ENCODE measurements at regions of chr3 and their contacts with region 1.

Region 1: DNA sequence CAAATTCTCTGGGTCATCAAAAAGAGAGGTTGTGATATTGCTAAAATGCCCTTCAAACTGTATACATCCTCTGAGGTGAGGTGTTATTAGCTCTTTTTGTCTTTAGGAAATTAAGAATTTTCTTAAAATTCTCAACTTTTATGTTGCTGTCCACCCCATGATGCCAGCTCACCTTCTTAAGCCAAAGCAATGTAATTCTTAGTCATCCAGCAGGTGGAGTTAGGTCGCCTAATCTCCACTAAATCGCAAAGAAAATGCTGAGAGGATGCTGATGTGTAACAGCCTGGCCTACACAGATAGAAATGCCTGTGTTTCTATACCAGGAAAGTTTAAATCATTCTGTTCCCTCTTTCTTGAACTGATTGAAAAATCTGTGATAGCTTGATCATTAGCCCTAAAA is 770.2 kb upstream of the ALCAM start:
- DNase-seq: peak; percentile 9
- H3K4me3 ChIP-seq: no peak overlapping the region
- CTCF ChIP-seq: peak; percentile 31

Region 2: GRCh38 chr3:104521606-104522336 is 74.8 kb before region 1 on chr3:
- CTCF ChIA-PET with region 1: no interaction called
- POLR2A ChIA-PET with region 1: no interaction called
- DNase-seq: no peak
- H3K4me3 ChIP-seq: no peak overlapping the region
- CTCF ChIP-seq: no peak

Region 3: GRCh38 chr3:104606812-104607211 is 10.3 kb after region 1 on chr3:
- CTCF ChIA-PET with region 1: interaction called, 12 read pairs
- POLR2A ChIA-PET with region 1: no interaction called
- DNase-seq: no peak
- H3K4me3 ChIP-seq: no peak overlapping the region
- CTCF ChIP-seq: no peak

Region 4: GRCh38 chr3:104750581-104750980 is 154.0 kb after region 1 on chr3:
- CTCF ChIA-PET with region 1: no interaction called
- POLR2A ChIA-PET with region 1: no interaction called
- DNase-seq: no peak
- H3K4me3 ChIP-seq: no peak overlapping the region
- CTCF ChIP-seq: no peak

Region 5: GRCh38 chr3:105366326-105367062 is 769.9 kb after region 1 on chr3 and contains the start of gene ALCAM:
- CTCF ChIA-PET with region 1: interaction called, 64 read pairs
- POLR2A ChIA-PET with region 1: no interaction called
- DNase-seq: peak; percentile 95
- H3K4me3 ChIP-seq: peak within 1 kb of the TSS; percentile 95
- CTCF ChIP-seq: peak; percentile 94